HepG2 (cell line): ENCODE measurements at regions of chr1 and their contacts with region 1.

Region 1: DNA sequence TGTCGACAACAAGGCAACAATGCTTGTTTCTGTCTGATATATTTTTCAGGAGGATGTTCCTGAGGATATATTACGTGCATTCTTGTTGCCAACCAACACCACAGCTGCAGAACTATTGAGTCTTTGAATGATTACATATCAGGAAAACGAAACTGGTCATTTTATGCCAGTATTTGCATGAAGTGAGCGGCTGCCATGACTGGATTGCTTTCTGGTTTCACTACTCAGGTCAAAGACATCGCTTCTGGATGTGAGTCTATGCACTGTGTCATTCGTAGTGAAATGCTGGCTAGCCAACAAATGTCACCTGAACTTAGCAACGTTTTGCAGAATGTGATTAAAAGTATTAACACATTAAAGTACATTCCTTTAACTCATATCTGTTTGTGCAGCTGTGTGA is 35.8 kb upstream of the OLFM3 start:
- DNase-seq: no peak
- ATAC-seq: no peak
- H3K4me3 ChIP-seq: no peak overlapping the region
- H3K27ac ChIP-seq: no peak overlapping the region
- H3K4me1 ChIP-seq: no peaks in the 10 kb centered on the region
- H3K27me3 ChIP-seq: no peaks in the 10 kb centered on the region
- CTCF ChIP-seq: no peak
- EP300 ChIP-seq: no peak
- POLR2A ChIP-seq: no peak
- RAD21 ChIP-seq: no peak

Region 2: GRCh38 chr1:101846820-101847219 is 185.7 kb before region 1 on chr1:
- CTCF ChIA-PET with region 1: no interaction called
- POLR2A ChIA-PET with region 1: no interaction called
- in situ Hi-C with region 1: no loop called
- intact Hi-C with region 1: no loop called
- DNase-seq: no peak
- ATAC-seq: no peak
- H3K4me3 ChIP-seq: no peak overlapping the region
- H3K27ac ChIP-seq: no peak overlapping the region
- H3K4me1 ChIP-seq: no peaks in the 10 kb centered on the region
- H3K27me3 ChIP-seq: no peaks in the 10 kb centered on the region
- CTCF ChIP-seq: no peak
- EP300 ChIP-seq: no peak
- POLR2A ChIP-seq: no peak
- RAD21 ChIP-seq: no peak

Region 3: DNA sequence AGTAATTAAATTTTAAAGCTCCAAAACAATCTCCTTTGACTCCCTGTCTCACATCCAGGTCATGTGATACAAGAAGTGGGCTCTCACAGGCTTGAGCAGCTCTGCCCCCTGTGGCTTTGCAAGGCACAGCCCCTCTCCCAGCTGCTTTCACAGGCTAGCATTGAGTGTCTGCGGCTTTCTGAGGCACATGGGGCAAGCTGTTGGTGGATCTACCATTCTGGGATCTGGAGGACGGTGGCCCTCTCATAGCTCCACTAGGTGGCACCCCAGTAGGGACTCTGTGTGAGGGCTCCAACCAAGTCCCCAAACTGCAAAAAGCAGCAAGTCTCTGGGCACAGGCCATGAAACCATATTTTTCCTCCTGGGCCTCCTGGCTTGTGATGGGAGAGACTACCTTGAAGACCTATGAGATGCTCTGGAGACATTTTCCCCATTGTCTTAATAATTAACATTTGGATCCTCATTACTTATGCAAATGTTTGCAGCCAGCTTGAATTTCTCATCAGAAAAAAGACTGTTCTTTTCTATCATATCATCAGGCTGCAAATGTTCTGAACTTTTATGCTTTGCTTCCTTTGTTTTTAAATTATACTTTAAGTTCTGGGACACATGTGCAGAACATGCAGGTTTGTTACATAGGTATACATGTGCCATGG is 518.3 kb after region 1 on chr1:
- CTCF ChIA-PET with region 1: no interaction called
- POLR2A ChIA-PET with region 1: no interaction called
- in situ Hi-C with region 1: no loop called
- intact Hi-C with region 1: loop called (anchors 5 kb)
- DNase-seq: peak; percentile 22
- ATAC-seq: peak; percentile 83
- H3K4me3 ChIP-seq: no peak overlapping the region
- H3K27ac ChIP-seq: no peak overlapping the region
- H3K4me1 ChIP-seq: no peaks in the 10 kb centered on the region
- H3K27me3 ChIP-seq: no peaks in the 10 kb centered on the region
- CTCF ChIP-seq: peak; percentile 40
- EP300 ChIP-seq: no peak
- POLR2A ChIP-seq: no peak
- RAD21 ChIP-seq: no peak